AG04449 (cell line): ENCODE measurements at regions of chr13 and their contacts with region 1.

Region 1: DNA sequence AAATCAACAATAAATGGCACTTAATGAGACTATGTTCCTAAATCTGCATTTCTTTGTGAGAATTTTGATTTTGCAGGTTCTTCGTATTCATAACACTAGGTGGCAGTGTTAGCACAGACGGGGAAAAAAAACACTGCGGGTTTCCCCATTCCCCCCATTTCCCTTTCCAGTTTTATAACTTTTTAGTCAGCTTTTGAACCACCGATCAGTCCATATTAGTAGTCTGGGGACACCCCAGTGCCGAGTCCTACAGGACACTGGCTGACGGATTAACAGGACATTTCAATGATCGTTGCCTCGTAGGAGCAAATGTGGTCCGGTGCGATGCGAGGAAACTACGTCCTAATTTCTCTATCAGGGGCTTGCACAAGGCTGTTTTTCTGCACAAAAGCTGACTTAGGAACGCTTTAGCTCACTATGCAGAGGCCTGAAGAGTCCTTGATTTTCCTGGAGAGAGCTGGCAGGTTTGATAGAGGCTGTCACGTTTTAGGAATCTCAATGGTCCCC is 234.3 kb downstream of the LMO7 start:
- DNase-seq: no peak
- H3K4me3 ChIP-seq: peak overlapping the region; percentile 6; the same call in 1 of the 2 replicates
- CTCF ChIP-seq: peak; percentile 36

Region 2: DNA sequence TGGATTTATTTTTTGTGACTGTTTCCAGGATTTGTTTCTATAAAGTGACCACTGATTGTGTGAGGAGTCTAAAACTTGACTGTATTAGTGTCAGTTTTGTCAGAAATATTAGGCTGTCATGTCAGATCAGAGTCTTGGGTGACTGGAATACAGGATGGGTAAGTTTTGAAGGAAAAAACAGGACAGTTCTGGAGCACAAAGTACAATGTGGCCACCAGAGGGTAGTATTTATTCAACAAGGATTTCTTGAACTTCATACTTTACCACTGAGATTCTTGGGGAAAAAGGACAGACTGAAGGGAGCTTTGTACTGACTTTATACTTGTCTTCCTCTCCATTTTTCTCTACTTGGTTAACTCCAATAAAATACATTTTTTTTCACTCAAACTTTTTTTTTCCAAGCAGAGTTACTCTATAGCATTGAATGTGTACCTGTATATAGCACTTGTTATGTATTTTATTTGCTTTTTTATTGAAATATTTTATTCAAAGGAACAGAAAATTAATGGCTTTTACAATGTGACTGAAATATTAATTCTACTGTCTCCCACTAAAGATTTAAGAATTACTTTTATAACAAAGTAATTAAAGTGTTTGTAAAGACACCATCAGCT is 183.2 kb before region 1 on chr13:
- CTCF ChIA-PET with region 1: interaction called, 23 read pairs
- POLR2A ChIA-PET with region 1: no interaction called
- DNase-seq: no peak
- H3K4me3 ChIP-seq: no peak overlapping the region
- CTCF ChIP-seq: peak; percentile 32

Region 3: DNA sequence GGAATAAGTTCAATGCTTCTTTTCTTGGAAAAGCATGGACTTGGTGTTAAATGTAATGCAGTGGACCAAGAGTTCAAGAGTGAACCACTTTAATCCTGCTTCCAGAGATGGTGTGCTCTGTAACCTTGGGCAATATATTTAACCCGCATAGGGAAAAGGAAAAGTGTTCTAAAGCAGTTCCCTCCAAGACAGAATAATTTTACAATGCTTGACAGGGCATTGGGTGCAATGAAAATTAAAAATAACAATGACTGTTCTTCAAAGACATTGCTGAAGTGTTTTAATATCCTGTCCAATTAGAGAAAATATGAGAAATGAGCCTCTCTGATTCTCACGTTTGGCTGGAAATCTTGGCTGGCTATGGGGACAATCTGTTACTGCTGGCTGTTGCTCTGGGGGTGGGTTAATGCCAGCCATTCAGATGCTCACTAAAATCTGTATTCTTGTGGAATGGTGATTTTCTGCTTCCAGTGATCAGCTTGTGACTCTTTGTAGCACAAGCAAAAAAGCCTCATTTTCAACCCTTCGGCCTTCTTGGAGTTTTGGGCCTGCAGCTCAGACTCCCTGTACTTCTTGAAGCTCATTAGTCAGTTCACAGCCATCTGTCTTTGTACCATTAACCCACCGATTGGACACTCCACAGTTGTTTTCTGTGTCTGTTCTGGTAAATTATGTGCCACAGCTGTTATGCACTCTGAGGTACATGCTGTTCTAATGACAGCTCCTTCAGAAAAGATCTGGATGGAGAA is 76.3 kb after region 1 on chr13:
- CTCF ChIA-PET with region 1: no interaction called
- POLR2A ChIA-PET with region 1: no interaction called
- DNase-seq: no peak
- H3K4me3 ChIP-seq: no peak overlapping the region
- CTCF ChIP-seq: no peak

Region 4: GRCh38 chr13:76016799-76017400 is 146.4 kb after region 1 on chr13:
- CTCF ChIA-PET with region 1: interaction called, 11 read pairs
- POLR2A ChIA-PET with region 1: no interaction called
- DNase-seq: no peak
- H3K4me3 ChIP-seq: no peak overlapping the region
- CTCF ChIP-seq: peak; percentile 45

Region 5: DNA sequence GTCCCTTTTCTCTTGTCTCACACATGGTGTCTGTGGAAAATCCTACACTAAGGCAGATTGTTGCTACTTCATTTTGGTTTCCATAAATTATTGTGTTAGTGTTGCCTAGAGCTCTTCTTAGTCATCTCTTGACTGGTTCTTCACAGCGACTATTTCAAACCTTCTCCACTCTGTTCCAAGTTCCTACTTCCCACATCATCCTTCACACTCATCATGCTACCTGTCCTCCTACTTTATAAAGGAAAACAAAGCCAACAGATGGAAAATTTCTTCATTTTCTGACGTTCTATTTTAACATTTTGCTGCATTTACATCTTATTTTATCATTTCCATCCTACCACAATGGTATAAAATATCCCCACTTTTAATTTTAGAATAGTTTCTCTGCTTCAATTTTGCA is 379.8 kb after region 1 on chr13:
- CTCF ChIA-PET with region 1: no interaction called
- POLR2A ChIA-PET with region 1: no interaction called
- DNase-seq: no peak
- H3K4me3 ChIP-seq: no peak overlapping the region
- CTCF ChIP-seq: no peak

Region 6: DNA sequence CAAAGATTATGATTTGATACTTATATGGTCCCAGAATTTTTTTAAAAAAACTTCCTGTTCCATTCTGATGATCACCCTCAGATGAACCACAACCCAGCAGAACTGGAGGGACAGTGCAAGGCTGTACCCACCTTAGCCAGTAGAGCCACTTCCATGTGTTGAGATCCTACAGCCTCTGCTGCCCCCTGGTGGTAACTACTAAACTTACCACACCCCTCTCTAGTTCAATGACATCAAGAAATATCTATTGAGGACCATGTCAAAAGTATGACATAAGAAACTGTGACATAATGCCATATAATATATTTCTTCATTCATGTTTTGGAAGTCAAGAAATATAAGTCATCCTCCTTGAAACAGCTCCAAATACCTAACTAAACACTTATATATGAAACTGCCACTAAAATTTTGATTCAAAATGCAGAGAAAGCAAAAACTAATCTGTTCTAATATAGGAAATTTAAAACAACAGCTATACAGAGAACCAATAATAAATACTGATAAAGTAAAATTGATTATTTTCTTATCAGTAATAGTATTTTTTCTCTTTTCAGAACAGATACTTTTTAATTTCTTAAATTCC is 603.2 kb after region 1 on chr13:
- CTCF ChIA-PET with region 1: interaction called, 252 read pairs
- POLR2A ChIA-PET with region 1: no interaction called
- DNase-seq: peak; percentile 12
- H3K4me3 ChIP-seq: no peak overlapping the region
- CTCF ChIP-seq: peak; percentile 79

Region 7: GRCh38 chr13:76903544-76904162 is 1033.2 kb after region 1 on chr13:
- CTCF ChIA-PET with region 1: interaction called, 15 read pairs
- POLR2A ChIA-PET with region 1: no interaction called
- DNase-seq: peak; percentile 41
- H3K4me3 ChIP-seq: no peak overlapping the region
- CTCF ChIP-seq: peak; percentile 96